BJ (cell line): ENCODE measurements at regions of chr5 and their contacts with region 1.

Region 1: GRCh38 chr5:126536874-126537273 is 58.1 kb downstream of the ALDH7A1 start:
- DNase-seq: no peak
- H3K4me3 ChIP-seq: no peak overlapping the region
- H3K27me3 ChIP-seq: no peaks in the 10 kb centered on the region
- CTCF ChIP-seq: peak; percentile 29; the same call in 1 of the 2 replicates

Region 2: GRCh38 chr5:126354012-126354857 is 182.6 kb before region 1 on chr5:
- CTCF ChIA-PET with region 1: interaction called, 36 read pairs
- POLR2A ChIA-PET with region 1: no interaction called
- DNase-seq: peak; percentile 96
- H3K4me3 ChIP-seq: peak overlapping the region; percentile 17; the same call in 1 of the 2 replicates
- H3K27me3 ChIP-seq: no peaks in the 10 kb centered on the region
- CTCF ChIP-seq: peak; percentile 40

Region 3: DNA sequence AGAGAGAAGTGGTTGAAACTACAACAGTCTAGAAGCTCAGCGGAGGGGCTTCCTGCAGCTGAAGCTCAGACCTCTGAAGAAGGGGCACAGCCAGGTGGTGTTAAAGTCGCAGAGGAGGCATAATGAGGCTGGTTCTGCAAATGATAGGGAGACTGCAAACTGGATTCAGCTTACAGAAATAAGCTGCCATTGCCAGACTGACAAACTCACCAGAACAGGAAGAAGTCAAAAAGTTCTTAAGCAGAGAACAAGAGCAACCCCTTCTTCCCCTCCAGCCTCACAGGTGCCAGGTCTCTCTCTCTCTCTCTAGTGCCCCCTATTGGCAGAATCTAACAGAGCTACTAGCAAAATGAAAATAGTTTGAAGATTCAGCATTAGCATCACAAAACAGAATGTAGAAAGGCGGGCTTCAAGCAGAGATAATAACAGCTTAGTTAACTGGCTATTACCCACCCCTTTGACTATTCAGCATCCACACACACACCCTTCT is 37.0 kb before region 1 on chr5:
- CTCF ChIA-PET with region 1: interaction called, 11 read pairs
- POLR2A ChIA-PET with region 1: no interaction called
- DNase-seq: no peak
- H3K4me3 ChIP-seq: no peak overlapping the region
- H3K27me3 ChIP-seq: no peaks in the 10 kb centered on the region
- CTCF ChIP-seq: peak; percentile 58

Region 4: DNA sequence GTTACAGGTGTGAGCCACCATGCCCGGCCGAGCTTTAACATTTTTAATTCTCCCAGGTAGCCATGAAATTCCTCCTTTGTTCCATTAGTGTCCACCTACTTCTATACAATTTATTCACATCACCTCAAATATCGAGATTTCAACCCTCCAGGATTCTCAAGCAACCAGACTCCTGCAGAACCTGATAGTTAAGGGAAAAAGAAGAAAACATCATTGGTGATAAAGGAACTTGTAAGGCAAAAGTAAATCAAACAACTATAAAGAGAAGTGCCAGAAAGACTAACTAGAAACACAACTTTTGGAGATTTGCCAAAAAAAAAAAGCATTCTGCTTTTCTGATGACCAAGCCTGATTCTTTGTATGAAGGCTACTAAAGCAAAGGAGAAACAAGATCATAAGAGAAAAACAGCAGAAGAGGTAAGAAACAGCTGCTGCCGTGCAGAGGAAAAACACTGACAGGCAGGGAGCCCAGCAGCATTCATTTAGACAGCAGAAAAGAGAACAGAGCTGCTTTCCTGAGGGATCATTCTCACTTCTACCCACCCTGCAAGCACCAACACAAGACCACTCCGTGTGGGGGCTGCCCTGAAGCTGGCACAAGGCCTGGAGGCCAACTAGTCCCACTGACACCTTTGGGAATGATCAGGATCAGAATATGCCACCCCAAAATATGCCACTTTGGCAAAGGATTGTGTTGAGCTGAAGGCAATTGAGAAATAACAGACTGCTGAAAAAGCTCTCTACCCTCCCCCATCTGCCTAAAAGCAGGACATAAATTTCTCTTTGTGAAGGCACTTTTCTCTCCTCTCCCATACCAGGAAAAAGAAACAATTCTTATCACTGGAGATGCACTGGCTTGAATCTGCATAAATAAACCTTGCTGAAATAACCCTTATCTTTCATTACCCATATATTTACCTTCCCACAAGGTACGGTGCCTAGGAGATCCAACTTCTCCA is 17.0 kb before region 1 on chr5:
- CTCF ChIA-PET with region 1: interaction called, 3 read pairs
- POLR2A ChIA-PET with region 1: interaction called, 12 read pairs
- DNase-seq: no peak
- H3K4me3 ChIP-seq: no peak overlapping the region
- H3K27me3 ChIP-seq: no peaks in the 10 kb centered on the region
- CTCF ChIP-seq: no peak

Region 5: DNA sequence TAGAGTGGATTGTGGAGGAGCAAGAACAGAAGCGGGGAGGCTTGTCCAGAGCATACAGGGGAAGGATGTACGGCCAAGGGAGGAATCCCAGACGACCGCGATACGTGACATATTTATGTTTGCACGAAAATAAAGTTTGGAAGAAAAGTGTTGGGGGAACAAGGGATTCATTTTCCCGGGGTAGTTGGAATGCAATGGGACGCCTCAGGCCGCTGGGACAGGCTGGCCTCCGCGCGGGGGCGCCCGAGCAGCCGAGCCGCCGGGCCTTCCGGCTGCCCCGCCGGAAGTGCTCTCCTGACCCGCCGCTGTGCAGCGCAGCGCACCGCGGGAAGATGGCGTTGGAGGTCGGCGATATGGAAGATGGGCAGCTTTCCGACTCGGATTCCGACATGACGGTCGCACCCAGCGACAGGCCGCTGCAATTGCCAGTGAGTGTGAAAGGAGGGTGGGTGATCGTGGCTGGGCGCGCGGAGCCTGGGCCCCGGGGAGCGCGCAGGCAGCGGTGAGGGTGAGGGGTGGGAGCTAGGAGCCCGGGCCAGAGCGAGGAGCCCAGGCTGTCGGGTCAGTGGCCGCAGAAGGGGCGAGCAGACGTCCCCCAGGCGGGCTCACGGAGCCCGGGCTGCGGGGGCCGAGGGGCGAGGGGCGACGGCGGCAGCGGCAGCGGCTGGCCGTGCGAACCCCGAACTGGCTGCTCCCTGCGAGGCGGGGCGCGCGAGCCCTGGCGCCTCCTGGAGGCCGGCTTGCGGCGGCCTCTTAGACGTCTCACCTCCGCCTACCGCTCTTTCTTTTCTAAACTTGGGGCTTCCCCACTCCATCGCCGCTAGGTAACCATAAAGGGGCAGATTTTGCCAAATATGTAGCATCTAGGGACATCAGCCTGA is 64.0 kb after region 1 on chr5 and contains the start of gene PHAX:
- CTCF ChIA-PET with region 1: interaction called, 10 read pairs
- POLR2A ChIA-PET with region 1: no interaction called
- DNase-seq: peak; percentile 21
- H3K4me3 ChIP-seq: peak within 1 kb of the TSS; percentile 87
- H3K27me3 ChIP-seq: no peaks in the 10 kb centered on the region
- CTCF ChIP-seq: peak; percentile 71
- polyA plus RNA-seq, gene PHAX: 40.7 and 41.6 TPM in 2 replicates